Heart right ventricle (tissue), 16 donors: ENCODE measurements at regions of chr10 and their contacts with region 1.

Region 1: GRCh38 chr10:80389809-80390208 is 18.5 kb upstream of the PRXL2A start:
- DNase-seq: no peak
- ATAC-seq: no peak
- H3K4me3 ChIP-seq: no peak overlapping the region
- H3K27ac ChIP-seq: peak overlapping the region in 3 of 10 donors; percentile 60 to 79 (median 70)
- H3K4me1 ChIP-seq: peaks cover 0 to 33% (median 13%) of the 10 kb centered on the region in 9 donors
- H3K27me3 ChIP-seq: no peaks in the 10 kb centered on the region
- CTCF ChIP-seq: no peak

Region 2: GRCh38 chr10:80509403-80510161 is 119.8 kb after region 1 on chr10:
- intact Hi-C with region 1: loop called in 4 of 10 experiments (anchors 5 kb)
- DNase-seq: peak in 1 of 2 donors; percentile 73
- ATAC-seq: peak; percentile 53 to 86 (median 76)
- H3K4me3 ChIP-seq: peak overlapping the region in 1 of 10 donors; percentile 19
- H3K27ac ChIP-seq: peak overlapping the region; percentile 63 to 87 (median 76)
- H3K4me1 ChIP-seq: peaks cover 20 to 76% (median 67%) of the 10 kb centered on the region in 9 donors
- H3K27me3 ChIP-seq: no peaks in the 10 kb centered on the region
- CTCF ChIP-seq: no peak